ENCODE measurements at regions of chr7 and their contacts with region 1.

Region 1: GRCh38 chr7:94129443-94130140 is 125.4 kb upstream of the BET1 start:
- DNase-seq: no peak
- ATAC-seq: no peak
- H3K4me3 ChIP-seq: no peak overlapping the region
- H3K27ac ChIP-seq: no peak overlapping the region
- H3K4me1 ChIP-seq: no peaks in the 10 kb centered on the region
- H3K27me3 ChIP-seq: no peaks in the 10 kb centered on the region
- CTCF ChIP-seq: no peak
- EP300 ChIP-seq: no peak
- POLR2A ChIP-seq: no peak
- RAD21 ChIP-seq: no peak

Region 2: GRCh38 chr7:93955304-93955703 is 174.3 kb before region 1 on chr7:
- CTCF ChIA-PET with region 1: no interaction called
- POLR2A ChIA-PET with region 1: no interaction called
- RAD21 ChIA-PET with region 1: no interaction called
- SMC1A ChIA-PET with region 1: no interaction called
- in situ Hi-C with region 1: no loop called
- intact Hi-C with region 1: no loop called
- DNase-seq: peak; percentile 19
- ATAC-seq: peak; percentile 91
- H3K4me3 ChIP-seq: no peak overlapping the region
- H3K27ac ChIP-seq: no peak overlapping the region
- H3K4me1 ChIP-seq: no peaks in the 10 kb centered on the region
- H3K27me3 ChIP-seq: no peaks in the 10 kb centered on the region
- CTCF ChIP-seq: no peak
- EP300 ChIP-seq: no peak
- POLR2A ChIP-seq: no peak
- RAD21 ChIP-seq: no peak

Region 3: DNA sequence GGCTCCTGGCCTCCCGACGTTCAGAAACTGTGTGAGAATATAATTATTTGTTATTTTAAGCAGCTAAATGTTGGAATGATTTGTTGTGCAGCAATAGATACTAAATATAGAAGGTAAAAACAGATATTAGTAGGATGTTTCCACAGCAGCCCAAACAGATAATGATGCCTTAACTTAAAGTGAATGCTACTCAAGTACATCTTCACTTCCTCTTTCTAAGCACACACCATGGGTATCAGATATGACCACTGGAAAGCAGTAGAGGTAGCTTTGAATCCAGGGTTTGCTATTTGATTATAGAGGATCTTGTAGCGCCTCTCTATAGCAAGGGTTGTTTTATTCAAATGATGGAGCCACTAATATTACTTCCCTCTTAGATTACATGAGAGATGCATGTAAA is 87.2 kb before region 1 on chr7:
- CTCF ChIA-PET with region 1: no interaction called
- POLR2A ChIA-PET with region 1: no interaction called
- RAD21 ChIA-PET with region 1: interaction called, 7 read pairs
- SMC1A ChIA-PET with region 1: interaction called, 12 read pairs
- in situ Hi-C with region 1: no loop called
- intact Hi-C with region 1: no loop called
- DNase-seq: no peak
- ATAC-seq: peak; percentile 80
- H3K4me3 ChIP-seq: no peak overlapping the region
- H3K27ac ChIP-seq: no peak overlapping the region
- H3K4me1 ChIP-seq: no peaks in the 10 kb centered on the region; the same call in 1 of the 2 replicates
- H3K27me3 ChIP-seq: no peaks in the 10 kb centered on the region
- CTCF ChIP-seq: 0 out of 6 replicates have a peak, but pooled peaks of 1 of the 3 experiments have one; percentile 3
- EP300 ChIP-seq: 0 out of 4 replicates have a peak, but pooled peaks of 1 of the 2 experiments have one; percentile 40
- POLR2A ChIP-seq: no peak
- RAD21 ChIP-seq: no peak

Region 4: DNA sequence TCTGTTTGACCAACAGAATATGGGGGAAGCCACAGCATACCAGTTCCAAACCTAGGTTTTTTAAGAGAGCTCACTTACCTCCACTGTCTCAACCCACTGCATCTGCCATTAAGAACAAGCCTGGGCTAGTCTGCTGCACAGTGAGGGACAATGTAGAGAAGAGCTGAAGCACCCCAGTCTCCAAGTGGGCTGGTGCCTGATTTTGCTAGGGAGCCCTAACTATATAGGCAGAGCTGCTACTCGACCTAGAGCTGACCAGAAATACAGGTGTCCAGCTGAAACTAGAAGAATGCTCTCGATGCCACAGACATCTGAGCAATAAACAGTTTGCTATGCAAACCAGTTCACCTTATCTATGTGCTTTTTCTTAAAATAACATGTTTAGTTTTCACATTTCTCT is 18.6 kb before region 1 on chr7:
- CTCF ChIA-PET with region 1: interaction called, 14 read pairs
- POLR2A ChIA-PET with region 1: no interaction called
- RAD21 ChIA-PET with region 1: interaction called, 7 read pairs
- SMC1A ChIA-PET with region 1: interaction called, 39 read pairs
- in situ Hi-C with region 1: no loop called
- intact Hi-C with region 1: no loop called
- DNase-seq: no peak
- ATAC-seq: peak; percentile 65
- H3K4me3 ChIP-seq: no peak overlapping the region
- H3K27ac ChIP-seq: no peak overlapping the region
- H3K4me1 ChIP-seq: no peaks in the 10 kb centered on the region
- H3K27me3 ChIP-seq: no peaks in the 10 kb centered on the region
- CTCF ChIP-seq: no peak
- EP300 ChIP-seq: no peak
- POLR2A ChIP-seq: no peak
- RAD21 ChIP-seq: no peak

Region 5: DNA sequence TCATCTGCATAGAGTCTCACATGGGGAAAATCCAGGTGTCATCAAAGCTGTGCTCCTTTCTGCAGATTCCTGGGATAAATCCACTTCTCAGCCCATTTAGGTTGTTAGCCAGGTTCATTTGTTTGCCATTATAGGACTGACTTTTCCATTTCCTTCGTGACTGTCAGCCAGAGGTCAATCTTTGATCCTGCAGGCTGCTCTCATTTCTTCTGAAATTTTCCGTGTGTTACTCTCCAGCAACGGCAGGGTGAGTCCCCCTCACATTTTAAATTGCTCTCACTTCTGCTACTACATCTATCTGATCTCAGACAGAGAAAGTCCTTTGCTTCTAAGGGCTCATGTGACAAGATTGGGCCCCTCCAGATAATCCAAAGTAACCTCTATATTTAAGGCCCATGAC is 25.3 kb after region 1 on chr7:
- CTCF ChIA-PET with region 1: interaction called, 3 read pairs
- POLR2A ChIA-PET with region 1: interaction called, 6 read pairs
- RAD21 ChIA-PET with region 1: interaction called, 9 read pairs
- SMC1A ChIA-PET with region 1: interaction called, 27 read pairs
- in situ Hi-C with region 1: no loop called
- intact Hi-C with region 1: no loop called
- DNase-seq: no peak
- ATAC-seq: peak; percentile 78
- H3K4me3 ChIP-seq: no peak overlapping the region
- H3K27ac ChIP-seq: no peak overlapping the region
- H3K4me1 ChIP-seq: no peaks in the 10 kb centered on the region
- H3K27me3 ChIP-seq: no peaks in the 10 kb centered on the region
- CTCF ChIP-seq: peak in 1 of 3 experiments; percentile 27; a peak in 1 of 6 replicates
- EP300 ChIP-seq: no peak
- POLR2A ChIP-seq: no peak
- RAD21 ChIP-seq: peak; percentile 27; the same call in 1 of the 2 replicates

Region 6: DNA sequence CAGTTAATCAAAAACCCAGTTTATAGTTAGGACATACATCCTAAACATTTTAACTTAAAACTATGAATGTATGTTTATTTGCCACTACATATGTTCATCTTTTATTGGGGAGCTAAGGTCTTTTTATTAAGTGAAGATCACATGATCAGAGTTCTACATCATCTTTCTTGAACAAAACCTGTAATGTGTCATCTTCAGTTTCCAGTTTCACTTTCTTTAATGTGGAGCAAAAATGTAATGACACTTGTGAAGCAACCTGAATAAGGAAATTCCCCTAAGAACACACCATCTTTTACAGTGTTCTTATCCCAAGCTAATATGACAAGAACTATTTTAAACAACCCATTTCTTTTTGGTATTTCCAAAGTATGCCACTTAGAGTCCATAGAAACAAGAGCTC is 41.2 kb after region 1 on chr7:
- CTCF ChIA-PET with region 1: no interaction called
- POLR2A ChIA-PET with region 1: interaction called, 7 read pairs
- RAD21 ChIA-PET with region 1: interaction called, 18 read pairs
- SMC1A ChIA-PET with region 1: interaction called, 17 read pairs
- in situ Hi-C with region 1: no loop called
- intact Hi-C with region 1: no loop called
- DNase-seq: peak; percentile 51
- ATAC-seq: peak; percentile 97
- H3K4me3 ChIP-seq: no peak overlapping the region
- H3K27ac ChIP-seq: no peak overlapping the region
- H3K4me1 ChIP-seq: no peaks in the 10 kb centered on the region; the same call in 1 of the 2 replicates
- H3K27me3 ChIP-seq: no peaks in the 10 kb centered on the region
- CTCF ChIP-seq: no peak
- EP300 ChIP-seq: peak; percentile 56 to 76; a peak in 2 of 4 replicates
- POLR2A ChIP-seq: no peak
- RAD21 ChIP-seq: no peak

Region 7: GRCh38 chr7:94228678-94229077 is 99.1 kb after region 1 on chr7:
- CTCF ChIA-PET with region 1: no interaction called
- POLR2A ChIA-PET with region 1: no interaction called
- RAD21 ChIA-PET with region 1: no interaction called
- SMC1A ChIA-PET with region 1: no interaction called
- in situ Hi-C with region 1: no loop called
- intact Hi-C with region 1: no loop called
- DNase-seq: no peak
- ATAC-seq: no peak
- H3K4me3 ChIP-seq: no peak overlapping the region
- H3K27ac ChIP-seq: no peak overlapping the region
- H3K4me1 ChIP-seq: no peaks in the 10 kb centered on the region
- H3K27me3 ChIP-seq: no peaks in the 10 kb centered on the region
- CTCF ChIP-seq: no peak
- EP300 ChIP-seq: no peak
- POLR2A ChIP-seq: no peak
- RAD21 ChIP-seq: no peak

Region 8: GRCh38 chr7:94395141-94396036 is 265.8 kb after region 1 on chr7:
- CTCF ChIA-PET with region 1: no interaction called
- POLR2A ChIA-PET with region 1: no interaction called
- RAD21 ChIA-PET with region 1: interaction called, 3 read pairs
- SMC1A ChIA-PET with region 1: no interaction called
- in situ Hi-C with region 1: no loop called
- intact Hi-C with region 1: loop called (anchors 10 kb)
- DNase-seq: peak; percentile 12
- ATAC-seq: peak; percentile 93
- H3K4me3 ChIP-seq: no peak overlapping the region
- H3K27ac ChIP-seq: no peak overlapping the region
- H3K4me1 ChIP-seq: no peaks in the 10 kb centered on the region
- H3K27me3 ChIP-seq: peaks cover 2 to 3% of the 10 kb centered on the region in 2 experiments; a peak in 2 of 4 replicates
- CTCF ChIP-seq: peak; percentile 63 to 79 (median 76)
- EP300 ChIP-seq: no peak
- POLR2A ChIP-seq: no peak
- RAD21 ChIP-seq: peak; percentile 90

Measured in GM12878 (cell line).